GM18951 (cell line): ENCODE measurements at regions of chr3 and their contacts with region 1.

Region 1: GRCh38 chr3:40337136-40338108 is 27.9 kb downstream of the EIF1B start:
- POLR2A ChIP-seq: no peak

Region 2: GRCh38 chr3:40574661-40575060 is 237.2 kb after region 1 on chr3:
- in situ Hi-C with region 1: loop called (anchors 25 kb)
- POLR2A ChIP-seq: no peak

Region 3: GRCh38 chr3:41489231-41489630 is 1151.8 kb after region 1 on chr3:
- in situ Hi-C with region 1: no loop called
- POLR2A ChIP-seq: no peak

Region 4: DNA sequence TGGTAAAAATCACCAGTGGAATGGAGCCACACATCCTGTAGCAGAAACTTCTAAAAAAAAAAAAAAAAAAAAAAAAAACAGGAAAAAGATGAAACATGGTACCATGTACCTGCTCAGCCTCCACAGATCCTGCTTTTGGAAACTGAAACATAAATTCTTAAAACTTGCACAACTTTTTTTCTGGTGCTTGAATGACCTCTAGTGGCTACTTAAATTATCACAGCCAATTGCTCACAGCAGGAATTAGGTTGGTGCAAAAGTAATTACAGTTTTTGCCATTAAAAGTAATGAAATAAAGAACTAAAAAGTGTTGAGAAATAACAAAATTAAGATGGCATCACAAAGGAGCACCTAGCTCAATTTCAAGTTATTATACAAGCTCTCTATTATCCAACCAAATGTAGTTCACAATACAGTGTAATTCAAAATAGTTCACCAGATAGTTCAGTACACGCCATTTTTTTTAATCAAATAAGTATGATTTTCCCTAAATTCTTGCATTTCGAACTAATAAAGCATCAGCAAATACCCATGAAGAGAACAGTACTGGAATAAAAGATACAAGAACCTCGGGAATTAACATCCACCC is 1543.9 kb after region 1 on chr3:
- in situ Hi-C with region 1: loop called (anchors 25 kb)
- POLR2A ChIP-seq: no peak